Tibial artery (tissue), 4 donors: ENCODE measurements at regions of chrX and their contacts with region 1.

Region 1: DNA sequence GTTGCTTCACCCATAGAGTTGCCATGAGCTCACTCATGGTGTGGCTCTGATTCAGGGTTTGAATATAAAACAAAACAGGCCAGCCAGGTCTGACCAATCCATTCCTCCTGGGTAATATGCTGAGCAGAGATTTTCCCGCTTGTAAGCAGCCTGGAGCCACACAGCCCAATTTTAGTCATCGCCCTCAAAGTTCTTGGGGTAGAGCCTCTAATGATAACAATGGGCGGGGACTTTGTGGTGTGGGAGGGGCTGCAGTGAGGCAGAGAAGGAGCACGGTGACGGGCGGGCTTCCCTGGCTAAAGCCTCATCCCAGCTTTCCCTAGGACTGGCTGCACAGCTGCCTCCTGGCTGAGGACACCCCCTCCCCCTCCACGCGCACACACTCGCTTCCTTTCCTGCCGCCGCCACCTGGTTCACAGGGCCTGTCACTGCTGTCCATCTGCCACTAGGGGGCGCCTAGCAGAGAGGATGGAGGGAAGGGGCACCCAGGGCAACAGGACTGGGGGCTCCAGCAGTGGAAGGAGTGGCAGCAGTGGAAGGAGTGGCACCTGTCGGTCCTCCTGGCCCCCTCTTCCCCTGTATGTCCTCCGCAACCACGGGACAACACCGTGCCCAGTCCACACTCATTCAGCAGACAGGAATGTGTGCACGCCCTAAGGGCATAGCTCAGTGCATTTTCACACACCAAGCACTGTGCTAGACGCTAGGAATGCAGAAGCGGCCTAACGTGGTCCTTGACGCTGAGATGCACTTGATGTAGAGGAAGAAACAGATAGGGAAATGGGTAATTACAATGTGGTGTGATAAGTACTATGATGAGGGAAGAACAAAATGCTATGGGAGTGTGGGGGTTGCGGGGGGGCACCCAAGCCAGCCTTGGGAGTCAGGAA is 26.8 kb downstream of the PRPS1 start:
- DNase-seq: peak; percentile 64 to 77
- H3K4me3 ChIP-seq: no peak overlapping the region
- H3K27ac ChIP-seq: peak overlapping the region in 1 of 2 donors; percentile 43
- H3K4me1 ChIP-seq: peaks cover 0 to 14% (median 3%) of the 10 kb centered on the region in 4 donors
- H3K27me3 ChIP-seq: no peaks in the 10 kb centered on the region
- CTCF ChIP-seq: peak; percentile 50 to 51

Region 2: GRCh38 chrX:107506596-107507031 is 148.5 kb before region 1 on chrX:
- intact Hi-C with region 1: no loop called
- DNase-seq: no peak
- H3K4me3 ChIP-seq: no peak overlapping the region
- H3K27ac ChIP-seq: no peak overlapping the region
- H3K4me1 ChIP-seq: peaks cover 0 to 9% (median 4%) of the 10 kb centered on the region in 4 donors
- H3K27me3 ChIP-seq: peaks cover 0 to 10% of the 10 kb centered on the region in 2 donors
- CTCF ChIP-seq: no peak

Region 3: GRCh38 chrX:107776649-107777535 is 121.8 kb after region 1 on chrX:
- intact Hi-C with region 1: loop called (anchors 5 kb)
- DNase-seq: peak; percentile 88 to 89
- H3K4me3 ChIP-seq: peak overlapping the region; percentile 70 to 71
- H3K27ac ChIP-seq: peak overlapping the region; percentile 88 to 94
- H3K4me1 ChIP-seq: peaks cover 0 to 20% (median 7%) of the 10 kb centered on the region in 4 donors
- H3K27me3 ChIP-seq: no peaks in the 10 kb centered on the region
- CTCF ChIP-seq: peak; percentile 52 to 82

Region 4: GRCh38 chrX:107894038-107894437 is 238.9 kb after region 1 on chrX:
- intact Hi-C with region 1: loop called (anchors 10 kb)
- DNase-seq: no peak
- H3K4me3 ChIP-seq: no peak overlapping the region
- H3K27ac ChIP-seq: no peak overlapping the region
- H3K4me1 ChIP-seq: no peaks in the 10 kb centered on the region
- H3K27me3 ChIP-seq: no peaks in the 10 kb centered on the region
- CTCF ChIP-seq: peak; percentile 35 to 58